Mammary epithelial cell (primary cell): ENCODE measurements at regions of chr6 and their contacts with region 1.

Region 1: DNA sequence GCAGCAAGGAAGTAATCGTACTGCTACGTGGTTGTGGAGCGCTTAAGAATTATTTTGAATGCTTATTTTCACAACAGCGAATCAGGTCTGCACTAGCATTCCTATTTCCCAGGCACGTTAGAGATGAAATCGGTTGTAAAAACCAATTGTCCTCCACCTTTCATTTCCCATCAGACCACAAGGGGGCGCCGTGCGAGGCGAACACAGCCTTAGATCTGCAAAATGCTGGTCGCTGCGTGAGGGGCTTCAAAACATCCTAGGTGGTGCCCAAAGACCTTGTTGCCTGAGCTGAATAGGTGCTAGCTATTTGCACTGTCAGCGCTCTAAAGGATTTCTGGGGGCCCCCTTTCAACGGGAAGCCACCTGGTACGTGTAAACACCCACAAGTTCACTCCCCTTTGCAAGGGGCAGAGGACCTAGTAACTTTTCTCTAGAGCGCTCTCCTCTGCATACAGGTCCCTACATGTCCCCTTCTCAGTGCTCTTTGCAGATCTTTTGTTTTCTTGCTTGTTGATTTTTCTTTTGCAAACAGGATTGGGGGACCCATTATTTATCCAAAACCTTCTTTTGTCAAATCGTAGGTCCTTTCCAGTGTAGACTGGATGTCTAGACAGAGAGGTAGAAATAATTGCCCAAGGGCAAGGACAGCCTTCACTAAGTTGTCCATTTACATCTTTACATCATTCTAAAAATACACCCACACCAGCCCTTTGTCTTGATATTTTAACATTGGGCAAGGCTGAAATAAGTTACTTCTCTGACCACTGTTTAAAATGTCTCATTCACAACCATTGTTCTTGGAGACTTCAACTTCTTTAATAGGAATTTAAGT is 59.8 kb downstream of the NEDD9 start:
- DNase-seq: peak; percentile 32
- H3K4me3 ChIP-seq: no peak overlapping the region
- H3K27ac ChIP-seq: no peak overlapping the region
- H3K4me1 ChIP-seq: peaks cover 8% of the 10 kb centered on the region
- H3K27me3 ChIP-seq: no peaks in the 10 kb centered on the region
- CTCF ChIP-seq: peak; percentile 72 to 84

Region 2: DNA sequence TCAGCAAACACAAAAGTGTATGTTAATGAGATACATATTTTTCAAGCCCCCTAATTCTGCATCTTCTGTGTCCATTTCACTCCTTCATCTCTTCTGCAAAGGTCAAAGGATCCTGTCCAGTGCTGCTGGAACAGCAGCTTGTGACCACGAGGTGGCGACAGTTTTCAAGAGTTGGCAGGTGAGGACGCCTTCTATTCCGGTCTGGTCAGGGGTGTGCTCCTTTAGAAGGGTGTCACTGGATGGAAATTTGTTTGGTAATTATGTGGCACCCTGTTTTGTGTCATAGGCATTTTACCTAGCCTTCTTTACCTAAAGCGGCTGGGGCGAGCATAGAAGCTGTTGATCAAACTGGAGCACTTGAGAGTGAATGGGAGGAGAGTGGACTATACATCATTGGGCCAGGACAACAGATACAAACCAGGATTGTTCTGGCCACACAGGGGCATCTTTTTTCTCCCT is 28.3 kb before region 1 on chr6:
- CTCF ChIA-PET with region 1: no interaction called
- dilution Hi-C with region 1: no loop called
- in situ Hi-C with region 1: no loop called
- intact Hi-C with region 1: loop called (anchors 1 kb)
- DNase-seq: peak; percentile 70
- H3K4me3 ChIP-seq: no peak overlapping the region
- H3K27ac ChIP-seq: peak overlapping the region; percentile 79
- H3K4me1 ChIP-seq: peaks cover 46% of the 10 kb centered on the region
- H3K27me3 ChIP-seq: no peaks in the 10 kb centered on the region
- CTCF ChIP-seq: peak; percentile 94 to 96

Region 3: GRCh38 chr6:11224252-11224965 is 51.7 kb after region 1 on chr6:
- CTCF ChIA-PET with region 1: no interaction called
- dilution Hi-C with region 1: no loop called
- in situ Hi-C with region 1: no loop called
- intact Hi-C with region 1: loop called (anchors 2 kb)
- DNase-seq: no peak
- H3K4me3 ChIP-seq: no peak overlapping the region
- H3K27ac ChIP-seq: no peak overlapping the region
- H3K4me1 ChIP-seq: peaks cover 33% of the 10 kb centered on the region
- H3K27me3 ChIP-seq: no peaks in the 10 kb centered on the region
- CTCF ChIP-seq: no peak

Region 4: GRCh38 chr6:11434565-11435326 is 262.0 kb after region 1 on chr6:
- CTCF ChIA-PET with region 1: no interaction called
- dilution Hi-C with region 1: no loop called
- in situ Hi-C with region 1: no loop called
- intact Hi-C with region 1: loop called (anchors 5 kb)
- DNase-seq: no peak
- H3K4me3 ChIP-seq: no peak overlapping the region
- H3K27ac ChIP-seq: no peak overlapping the region
- H3K4me1 ChIP-seq: peaks cover 31% of the 10 kb centered on the region
- H3K27me3 ChIP-seq: no peaks in the 10 kb centered on the region
- CTCF ChIP-seq: no peak